PC-9 (cell line): ENCODE measurements at regions of chr2 and their contacts with region 1.

Region 1: GRCh38 chr2:226478109-226478809 is 321.4 kb downstream of the IRS1 start:
- DNase-seq: peak; percentile 48 to 77
- H3K4me3 ChIP-seq: no peak overlapping the region
- H3K27ac ChIP-seq: no peak overlapping the region
- H3K4me1 ChIP-seq: peaks cover 24% of the 10 kb centered on the region
- H3K27me3 ChIP-seq: no peaks in the 10 kb centered on the region
- CTCF ChIP-seq: no peak

Region 2: GRCh38 chr2:226118471-226119430 is 359.5 kb before region 1 on chr2:
- CTCF ChIA-PET with region 1: no interaction called
- POLR2A ChIA-PET with region 1: no interaction called
- intact Hi-C with region 1: loop called (anchors 1 kb)
- DNase-seq: peak; percentile 33 to 92
- H3K4me3 ChIP-seq: peak overlapping the region; percentile 27; the same call in 1 of the 2 replicates
- H3K27ac ChIP-seq: peak overlapping the region; percentile 93
- H3K4me1 ChIP-seq: peaks cover 64% of the 10 kb centered on the region
- H3K27me3 ChIP-seq: no peaks in the 10 kb centered on the region
- CTCF ChIP-seq: no peak

Region 3: GRCh38 chr2:226185616-226186211 is 292.5 kb before region 1 on chr2:
- CTCF ChIA-PET with region 1: no interaction called
- POLR2A ChIA-PET with region 1: no interaction called
- intact Hi-C with region 1: loop called (anchors 5 kb)
- DNase-seq: peak; percentile 26 to 70
- H3K4me3 ChIP-seq: no peak overlapping the region
- H3K27ac ChIP-seq: peak overlapping the region; percentile 77
- H3K4me1 ChIP-seq: peaks cover 19% of the 10 kb centered on the region
- H3K27me3 ChIP-seq: no peaks in the 10 kb centered on the region
- CTCF ChIP-seq: no peak

Region 4: GRCh38 chr2:226227359-226227758 is 250.9 kb before region 1 on chr2:
- CTCF ChIA-PET with region 1: no interaction called
- POLR2A ChIA-PET with region 1: no interaction called
- intact Hi-C with region 1: no loop called
- DNase-seq: no peak
- H3K4me3 ChIP-seq: no peak overlapping the region
- H3K27ac ChIP-seq: no peak overlapping the region
- H3K4me1 ChIP-seq: no peaks in the 10 kb centered on the region
- H3K27me3 ChIP-seq: no peaks in the 10 kb centered on the region
- CTCF ChIP-seq: no peak

Region 5: GRCh38 chr2:226334981-226335720 is 143.1 kb before region 1 on chr2:
- CTCF ChIA-PET with region 1: no interaction called
- POLR2A ChIA-PET with region 1: no interaction called
- intact Hi-C with region 1: loop called (anchors 2 kb)
- DNase-seq: peak in 1 of 2 experiments; percentile 29
- H3K4me3 ChIP-seq: no peak overlapping the region
- H3K27ac ChIP-seq: no peak overlapping the region
- H3K4me1 ChIP-seq: peaks cover 16% of the 10 kb centered on the region
- H3K27me3 ChIP-seq: no peaks in the 10 kb centered on the region
- CTCF ChIP-seq: no peak

Region 6: GRCh38 chr2:226583715-226584114 is 105.5 kb after region 1 on chr2:
- CTCF ChIA-PET with region 1: no interaction called
- POLR2A ChIA-PET with region 1: no interaction called
- intact Hi-C with region 1: loop called (anchors 5 kb)
- DNase-seq: peak in 1 of 2 experiments; percentile 83
- H3K4me3 ChIP-seq: no peak overlapping the region
- H3K27ac ChIP-seq: peak overlapping the region; percentile 31; the same call in 1 of the 2 replicates
- H3K4me1 ChIP-seq: peaks cover 19% of the 10 kb centered on the region
- H3K27me3 ChIP-seq: no peaks in the 10 kb centered on the region
- CTCF ChIP-seq: no peak

Region 7: GRCh38 chr2:226673314-226673723 is 195.1 kb after region 1 on chr2:
- CTCF ChIA-PET with region 1: interaction called, 4 read pairs
- POLR2A ChIA-PET with region 1: interaction called, 7 read pairs
- intact Hi-C with region 1: loop called (anchors 1 kb)
- DNase-seq: peak; percentile 92 to 97
- H3K4me3 ChIP-seq: no peak overlapping the region
- H3K27ac ChIP-seq: peak overlapping the region; percentile 66
- H3K4me1 ChIP-seq: peaks cover 34% of the 10 kb centered on the region
- H3K27me3 ChIP-seq: no peaks in the 10 kb centered on the region
- CTCF ChIP-seq: no peak